ENCODE measurements at regions of chr14 and their contacts with region 1.

Region 1: DNA sequence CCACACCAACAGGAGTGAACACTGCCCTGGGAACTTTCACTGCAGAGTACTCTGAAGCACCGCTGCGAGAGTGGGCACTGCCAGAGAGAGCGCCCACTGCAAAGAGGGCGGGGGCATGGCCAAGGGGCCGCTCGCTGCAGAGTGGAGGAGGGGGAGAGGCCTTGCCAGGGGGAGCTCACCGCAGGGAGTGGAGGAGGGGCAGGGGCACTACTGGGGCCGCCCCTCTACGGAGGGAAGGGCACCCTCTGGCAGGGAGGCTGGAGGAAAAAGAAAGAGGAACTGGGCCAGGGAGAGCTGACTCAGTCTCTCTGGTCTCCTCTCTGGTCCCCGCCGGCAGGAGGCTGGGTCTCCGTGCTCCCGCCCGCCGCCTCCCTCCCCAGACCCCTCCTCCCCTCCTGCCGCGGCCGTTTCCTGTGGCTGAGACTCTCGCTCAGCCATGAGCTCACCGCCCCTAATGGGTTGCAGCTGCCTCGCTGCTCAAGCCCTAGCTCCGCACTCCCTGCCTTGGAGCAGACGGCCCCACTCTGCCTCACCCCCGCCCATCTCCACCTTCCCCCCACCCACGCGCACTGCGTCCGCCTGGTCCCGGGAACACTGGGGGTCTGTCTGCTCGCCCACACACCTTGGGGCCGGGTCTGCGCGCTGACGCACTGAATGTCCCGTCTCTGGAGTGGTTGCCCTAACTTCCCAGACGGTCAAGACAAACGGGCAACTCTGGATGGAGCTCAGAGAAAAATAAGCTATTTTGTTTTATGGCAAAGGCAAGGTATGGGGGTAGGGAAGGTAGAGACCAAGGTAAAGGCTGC is 1.3 kb downstream of the ARHGEF40 start:
- DNase-seq: peak; percentile 71
- H3K4me3 ChIP-seq: peak overlapping the region; percentile 79
- H3K27me3 ChIP-seq: no peaks in the 10 kb centered on the region
- CTCF ChIP-seq: 0 out of 2 replicates have a peak, but pooled peaks have one; percentile 8

Region 2: GRCh38 chr14:21039585-21040369 is 31.7 kb before region 1 on chr14:
- CTCF ChIA-PET with region 1: interaction called, 16 read pairs
- POLR2A ChIA-PET with region 1: interaction called, 19 read pairs
- DNase-seq: no peak
- H3K4me3 ChIP-seq: no peak overlapping the region
- H3K27me3 ChIP-seq: peaks cover 6% of the 10 kb centered on the region
- CTCF ChIP-seq: peak; percentile 59

Region 3: DNA sequence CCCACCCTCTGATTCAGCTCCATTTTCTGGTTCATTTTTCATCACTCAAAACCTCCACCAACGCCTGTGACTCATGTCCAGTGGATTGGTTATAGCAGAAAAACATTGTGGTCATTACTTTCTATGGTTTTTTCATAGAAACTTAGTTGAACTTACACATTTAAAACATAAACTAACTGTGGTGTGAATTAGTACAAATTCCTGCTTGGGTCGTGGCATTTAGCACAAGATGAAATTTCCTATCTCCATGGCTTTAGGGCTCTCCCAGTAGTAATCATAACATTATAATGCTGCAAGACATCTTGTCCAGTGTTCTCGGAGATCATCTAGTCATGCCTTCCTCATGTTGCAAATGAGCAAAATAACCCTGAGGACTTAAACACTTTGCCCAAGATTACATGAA is 22.2 kb before region 1 on chr14:
- CTCF ChIA-PET with region 1: interaction called, 21 read pairs
- POLR2A ChIA-PET with region 1: no interaction called
- DNase-seq: no peak
- H3K4me3 ChIP-seq: no peak overlapping the region
- H3K27me3 ChIP-seq: peaks cover 2% of the 10 kb centered on the region; the same call in 1 of the 2 replicates
- CTCF ChIP-seq: no peak

Region 4: GRCh38 chr14:21057803-21058675 is 13.4 kb before region 1 on chr14 and contains the start of gene RNASE8:
- CTCF ChIA-PET with region 1: interaction called, 13 read pairs
- POLR2A ChIA-PET with region 1: no interaction called
- DNase-seq: no peak
- H3K4me3 ChIP-seq: no peak within 1 kb of the TSS
- H3K27me3 ChIP-seq: no peaks in the 10 kb centered on the region
- CTCF ChIP-seq: peak; percentile 39
- polyA plus RNA-seq, gene RNASE8: not detected in 2 replicates

Region 5: DNA sequence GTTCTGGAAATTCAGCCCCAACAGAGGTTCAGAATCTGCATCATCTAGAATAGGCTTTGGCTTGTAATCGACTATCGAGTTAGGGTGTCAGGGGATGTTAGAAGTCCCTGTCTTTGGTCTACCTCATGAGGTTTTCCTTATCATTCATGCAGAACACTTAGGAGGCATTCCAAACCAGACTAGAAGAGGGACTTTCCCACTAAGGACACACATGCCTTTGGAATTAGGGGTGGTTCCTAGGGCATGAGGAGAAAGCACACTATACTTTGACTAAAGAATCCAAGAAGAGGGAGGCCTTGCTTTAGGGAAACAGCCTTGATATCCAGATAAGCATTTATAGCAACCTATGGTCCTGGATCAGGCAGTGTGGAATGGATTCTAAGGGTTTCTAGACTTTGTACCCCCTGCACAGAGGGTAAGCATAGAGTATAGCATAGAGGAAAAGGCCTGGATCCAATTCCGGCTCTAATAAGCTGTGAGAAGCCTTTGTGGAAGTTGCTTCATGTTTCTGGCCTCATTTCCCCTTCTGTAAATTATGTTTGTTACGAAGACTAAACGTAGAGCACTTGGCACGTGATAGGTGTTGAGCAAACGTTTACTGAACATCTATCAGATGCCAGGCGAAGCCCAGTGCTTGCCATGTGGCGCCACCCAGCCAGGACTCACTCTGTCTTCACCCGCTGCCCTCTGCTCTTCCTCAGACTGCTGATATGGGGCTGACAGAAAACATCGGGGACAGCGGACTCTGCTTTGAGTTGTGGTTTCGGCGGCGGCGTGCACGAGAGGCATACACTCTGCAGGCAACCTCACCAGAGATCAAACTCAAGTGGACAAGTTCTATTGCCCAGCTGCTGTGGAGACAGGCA is 13.8 kb after region 1 on chr14:
- CTCF ChIA-PET with region 1: interaction called, 55 read pairs
- POLR2A ChIA-PET with region 1: no interaction called
- DNase-seq: no peak
- H3K4me3 ChIP-seq: no peak overlapping the region
- H3K27me3 ChIP-seq: no peaks in the 10 kb centered on the region
- CTCF ChIP-seq: no peak

Region 6: GRCh38 chr14:21103710-21104447 is 32.5 kb after region 1 on chr14:
- CTCF ChIA-PET with region 1: interaction called, 149 read pairs
- POLR2A ChIA-PET with region 1: no interaction called
- DNase-seq: peak; percentile 67
- H3K4me3 ChIP-seq: peak overlapping the region; percentile 69
- H3K27me3 ChIP-seq: 0 out of 2 replicates have a peak, but pooled peaks cover 1% of the 10 kb centered on the region
- CTCF ChIP-seq: peak; percentile 89

Measured in BJ (cell line).